ENCODE measurements at regions of chr2 and their contacts with region 1.

Region 1: DNA sequence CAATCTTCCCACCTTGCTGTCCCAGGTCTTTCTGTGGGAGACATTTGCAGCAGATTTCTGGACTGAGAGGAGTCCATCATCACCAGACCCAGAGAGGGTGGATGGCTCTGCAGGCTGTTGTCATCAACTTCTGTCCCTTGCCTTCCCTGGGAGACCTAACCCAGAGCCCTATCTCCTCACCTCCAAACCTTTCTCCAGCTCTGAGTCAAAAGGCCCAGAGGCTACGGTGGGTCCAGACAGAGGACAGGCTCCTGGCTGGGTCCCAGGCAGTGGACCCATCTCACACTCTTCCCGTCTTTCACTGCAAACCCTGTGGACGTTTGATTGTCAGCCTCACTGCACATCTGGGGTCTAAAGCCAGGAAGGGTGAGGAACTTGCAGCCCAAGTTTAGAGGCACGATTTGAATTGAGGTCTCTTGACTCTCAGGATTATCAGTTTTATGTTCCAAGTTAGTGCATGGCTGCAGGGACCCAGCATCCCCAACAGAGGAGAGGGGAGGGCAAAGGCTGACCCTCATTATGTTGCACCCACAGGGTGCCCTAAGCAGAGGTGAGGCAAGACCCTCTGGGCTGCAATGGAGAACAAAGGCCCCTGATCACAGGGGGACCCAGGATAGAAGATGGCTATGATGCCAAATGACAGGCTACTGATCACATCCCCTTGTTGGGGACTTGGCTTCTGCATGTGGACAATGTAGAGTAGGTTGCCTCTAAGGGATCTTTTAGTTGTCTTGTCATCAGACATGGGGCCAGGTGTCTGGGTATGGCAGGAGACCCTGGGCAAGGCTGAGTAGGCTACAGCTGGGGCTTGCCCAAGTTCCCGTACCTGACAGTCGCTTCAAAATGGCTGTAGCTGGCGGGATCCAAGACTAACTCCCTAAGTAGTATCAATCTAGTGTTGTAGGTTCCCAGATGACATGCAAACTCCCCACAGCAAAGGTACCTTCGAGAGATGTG is 4.7 kb upstream of the GDF7 start:
- DNase-seq: no peak
- ATAC-seq: no peak
- H3K4me3 ChIP-seq: no peak overlapping the region
- H3K4me1 ChIP-seq: peaks cover 18% of the 10 kb centered on the region
- CTCF ChIP-seq: no peak

Region 2: GRCh38 chr2:20962939-20963557 is 300.8 kb after region 1 on chr2:
- intact Hi-C with region 1: loop called in 1 of 2 experiments (anchors 2 kb)
- DNase-seq: peak in 2 of 3 donors; percentile 75 to 88
- ATAC-seq: peak; percentile 82
- H3K4me3 ChIP-seq: no peak overlapping the region
- H3K4me1 ChIP-seq: no peaks in the 10 kb centered on the region
- CTCF ChIP-seq: peak; percentile 52